ENCODE measurements at regions of chr20 and their contacts with region 1.

Region 1: DNA sequence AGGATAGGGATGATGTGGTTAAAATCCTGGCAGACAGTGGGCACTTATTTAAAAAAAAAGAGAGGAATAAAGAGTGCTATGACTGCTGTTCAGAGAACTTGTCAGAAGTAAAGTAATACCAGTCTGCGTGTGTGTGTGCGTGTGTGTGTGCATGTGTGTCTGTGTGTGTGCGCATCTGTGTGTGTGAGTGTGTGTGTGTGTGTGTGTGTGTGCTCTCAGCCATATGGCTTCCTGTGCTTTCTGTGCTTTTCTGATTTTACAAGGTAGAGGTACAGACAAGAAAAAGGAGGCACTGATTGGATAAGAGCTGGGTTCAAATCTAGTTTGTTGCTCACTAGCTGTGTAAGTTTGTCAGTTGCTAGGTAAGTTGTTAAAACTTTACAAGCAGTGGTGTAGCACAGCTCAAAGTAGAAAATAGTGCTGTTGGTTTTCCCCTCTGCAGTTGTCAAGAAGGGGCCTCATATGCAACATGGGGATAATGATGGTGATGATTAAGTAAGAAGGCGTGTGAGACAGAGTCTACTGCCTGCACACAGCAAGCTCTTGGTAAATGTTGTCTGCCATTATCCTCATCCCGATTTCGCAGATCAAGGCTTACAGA is 155.3 kb upstream of the ZNF217 start:
- DNase-seq: peak; percentile 58
- ATAC-seq: no peak
- H3K4me3 ChIP-seq: no peak overlapping the region
- H3K27ac ChIP-seq: peak overlapping the region; percentile 47
- H3K4me1 ChIP-seq: peaks cover 56% of the 10 kb centered on the region
- H3K27me3 ChIP-seq: no peaks in the 10 kb centered on the region
- CTCF ChIP-seq: no peak

Region 2: GRCh38 chr20:53578492-53579222 is 170.3 kb before region 1 on chr20:
- CTCF ChIA-PET with region 1: interaction called, 3 read pairs
- POLR2A ChIA-PET with region 1: interaction called, 8 read pairs
- intact Hi-C with region 1: loop called (anchors 2 kb)
- DNase-seq: peak; percentile 100
- ATAC-seq: peak; percentile 12
- H3K4me3 ChIP-seq: peak overlapping the region; percentile 75
- H3K27ac ChIP-seq: peak overlapping the region; percentile 88
- H3K4me1 ChIP-seq: peaks cover 59% of the 10 kb centered on the region
- H3K27me3 ChIP-seq: no peaks in the 10 kb centered on the region
- CTCF ChIP-seq: peak; percentile 99

Region 3: GRCh38 chr20:53643031-53643832 is 105.7 kb before region 1 on chr20:
- CTCF ChIA-PET with region 1: no interaction called
- POLR2A ChIA-PET with region 1: interaction called, 3 read pairs
- intact Hi-C with region 1: loop called (anchors 2 kb)
- DNase-seq: peak; percentile 94
- ATAC-seq: peak; percentile 92
- H3K4me3 ChIP-seq: peak overlapping the region; percentile 51
- H3K27ac ChIP-seq: peak overlapping the region; percentile 80
- H3K4me1 ChIP-seq: peaks cover 32% of the 10 kb centered on the region
- H3K27me3 ChIP-seq: no peaks in the 10 kb centered on the region
- CTCF ChIP-seq: no peak

Region 4: GRCh38 chr20:53763707-53764414 is 14.9 kb after region 1 on chr20:
- CTCF ChIA-PET with region 1: no interaction called
- POLR2A ChIA-PET with region 1: no interaction called
- intact Hi-C with region 1: no loop called
- DNase-seq: peak; percentile 55
- ATAC-seq: peak; percentile 76
- H3K4me3 ChIP-seq: no peak overlapping the region
- H3K27ac ChIP-seq: peak overlapping the region; percentile 15
- H3K4me1 ChIP-seq: peaks cover 17% of the 10 kb centered on the region
- H3K27me3 ChIP-seq: no peaks in the 10 kb centered on the region
- CTCF ChIP-seq: no peak